Heart left ventricle (tissue), 16 donors: ENCODE measurements at regions of chr4 and their contacts with region 1.

Region 1: DNA sequence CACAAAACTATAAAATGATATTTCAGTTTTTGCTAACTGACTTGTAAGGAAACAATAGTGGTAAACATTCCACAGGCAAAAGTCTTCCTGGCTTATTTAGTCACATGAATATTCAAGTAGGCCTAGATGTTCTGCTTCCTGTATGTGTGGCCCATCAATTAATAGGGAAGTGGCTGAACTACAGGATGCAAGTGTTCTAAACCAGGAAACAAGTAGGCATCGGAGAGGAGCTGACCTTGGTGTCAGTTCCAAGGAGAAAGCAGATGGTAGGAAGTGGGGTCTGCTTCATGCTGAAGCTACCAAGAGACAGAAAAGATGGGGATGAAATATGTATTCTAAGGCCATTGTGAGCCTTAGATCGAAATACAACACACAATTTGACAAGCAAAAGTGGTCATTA is 149.7 kb downstream of the ANTXR2 start:
- DNase-seq: no peak
- ATAC-seq: no peak
- H3K4me3 ChIP-seq: no peak overlapping the region
- H3K27ac ChIP-seq: no peak overlapping the region
- H3K4me1 ChIP-seq: no peaks in the 10 kb centered on the region
- H3K27me3 ChIP-seq: no peaks in the 10 kb centered on the region
- CTCF ChIP-seq: no peak
- POLR2A ChIP-seq: no peak

Region 2: DNA sequence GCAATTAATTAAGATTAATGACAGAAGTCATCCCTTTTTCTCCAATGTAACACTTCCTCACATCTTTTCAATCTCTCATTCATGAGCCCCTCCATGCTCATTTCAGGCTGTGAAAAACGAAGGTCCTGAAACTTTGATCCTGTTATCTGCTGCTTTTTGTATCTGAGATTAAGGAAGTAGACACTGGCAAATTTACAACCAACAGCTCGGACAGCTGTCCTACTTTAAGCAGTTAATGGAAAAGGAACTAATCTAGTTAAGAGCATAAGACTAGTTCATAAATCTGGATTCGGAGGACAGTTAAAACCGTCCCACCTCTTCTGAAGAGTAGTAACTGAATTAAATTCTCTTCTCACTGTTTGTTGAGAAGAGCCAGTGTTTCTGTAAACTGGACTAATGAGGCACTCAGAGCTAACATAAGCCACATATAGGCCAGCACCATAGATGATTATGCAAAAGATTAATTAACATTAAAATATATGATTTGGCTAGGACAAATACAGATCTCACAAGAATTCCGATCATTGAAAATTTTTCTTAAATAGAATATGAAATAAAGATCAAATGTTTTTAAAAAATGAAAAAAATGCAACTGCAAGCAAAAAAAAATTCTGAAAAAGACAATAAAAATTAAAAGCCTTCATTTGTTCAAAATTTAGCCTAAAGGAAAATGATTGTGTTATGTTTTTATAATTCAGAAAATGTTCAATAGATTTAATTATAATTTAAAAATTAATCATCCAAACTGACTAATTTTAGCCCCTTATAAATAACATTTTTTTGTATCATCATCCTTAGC is 35.4 kb after region 1 on chr4:
- intact Hi-C with region 1: loop called in 1 of 10 experiments (anchors 2 kb)
- DNase-seq: no peak
- ATAC-seq: no peak
- H3K4me3 ChIP-seq: no peak overlapping the region
- H3K27ac ChIP-seq: no peak overlapping the region
- H3K4me1 ChIP-seq: peaks cover 0 to 9% (median 0%) of the 10 kb centered on the region in 12 donors
- H3K27me3 ChIP-seq: no peaks in the 10 kb centered on the region
- CTCF ChIP-seq: no peak
- POLR2A ChIP-seq: no peak

Region 3: GRCh38 chr4:80007745-80008149 is 84.5 kb after region 1 on chr4:
- intact Hi-C with region 1: no loop called
- DNase-seq: no peak
- ATAC-seq: no peak
- H3K4me3 ChIP-seq: no peak overlapping the region
- H3K27ac ChIP-seq: peak overlapping the region in 1 of 12 donors; percentile 65
- H3K4me1 ChIP-seq: peaks cover 0 to 44% (median 9%) of the 10 kb centered on the region in 12 donors
- H3K27me3 ChIP-seq: no peaks in the 10 kb centered on the region
- CTCF ChIP-seq: no peak
- POLR2A ChIP-seq: no peak

Region 4: GRCh38 chr4:80184053-80184790 is 260.9 kb after region 1 on chr4:
- intact Hi-C with region 1: loop called in 1 of 10 experiments (anchors 10 kb)
- DNase-seq: peak; percentile 85 to 95 (median 88)
- ATAC-seq: peak; percentile 82 to 98 (median 96)
- H3K4me3 ChIP-seq: peak overlapping the region; percentile 38 to 80 (median 63)
- H3K27ac ChIP-seq: peak overlapping the region in 10 of 12 donors; percentile 23 to 83 (median 66)
- H3K4me1 ChIP-seq: peaks cover 0 to 45% (median 21%) of the 10 kb centered on the region in 12 donors
- H3K27me3 ChIP-seq: peaks cover 14 to 55% (median 42%) of the 10 kb centered on the region in 9 donors
- CTCF ChIP-seq: peak; percentile 71 to 98 (median 90)
- POLR2A ChIP-seq: no peak